ENCODE measurements at regions of chr10 and their contacts with region 1.

Region 1: DNA sequence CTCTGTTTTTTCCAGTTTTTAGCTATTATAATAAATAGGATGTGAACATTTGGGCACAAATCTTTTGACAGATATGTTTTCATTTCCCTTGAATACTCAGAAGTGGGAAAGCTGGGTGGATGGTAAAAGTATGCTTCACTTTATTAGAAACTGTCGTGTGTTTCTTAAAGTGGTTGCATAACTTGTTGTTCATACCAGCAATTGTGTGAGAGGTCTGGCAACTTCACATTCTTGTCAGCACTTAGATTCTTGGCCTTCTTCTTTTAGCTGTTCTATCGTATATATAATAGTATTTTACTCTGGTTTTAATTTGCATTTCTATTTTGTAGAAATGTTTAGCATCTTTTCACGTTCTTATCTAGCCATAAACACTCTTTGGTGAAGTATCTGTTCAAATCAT is 894.4 kb downstream of the KCNMA1 start:
- DNase-seq: no peak
- ATAC-seq: no peak
- H3K4me3 ChIP-seq: no peak overlapping the region
- H3K27ac ChIP-seq: no peak overlapping the region
- H3K4me1 ChIP-seq: no peaks in the 10 kb centered on the region
- H3K27me3 ChIP-seq: peaks cover 79% of the 10 kb centered on the region
- CTCF ChIP-seq: no peak

Region 2: DNA sequence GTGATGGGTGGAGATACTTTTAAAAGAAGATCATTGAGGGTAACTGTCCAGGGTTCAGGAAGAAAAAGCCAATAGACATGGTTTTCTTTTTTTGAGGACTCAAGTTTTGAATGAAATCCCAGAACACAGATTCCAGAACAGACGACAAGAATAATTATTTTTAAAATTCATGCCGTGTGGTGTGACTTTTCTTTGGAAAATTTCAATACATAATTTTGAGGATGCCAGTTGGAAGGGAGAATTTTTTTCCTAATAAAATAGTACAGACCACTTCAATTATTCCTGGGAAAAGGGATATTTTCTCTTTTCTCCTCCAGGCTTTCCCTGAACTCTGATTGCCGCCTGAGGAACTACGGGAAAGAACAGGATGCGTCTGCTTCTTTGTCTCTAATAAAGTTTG is 57.0 kb before region 1 on chr10:
- CTCF ChIA-PET with region 1: no interaction called
- POLR2A ChIA-PET with region 1: no interaction called
- intact Hi-C with region 1: loop called (anchors 5 kb)
- DNase-seq: no peak
- ATAC-seq: no peak
- H3K4me3 ChIP-seq: no peak overlapping the region
- H3K27ac ChIP-seq: no peak overlapping the region
- H3K4me1 ChIP-seq: no peaks in the 10 kb centered on the region
- H3K27me3 ChIP-seq: peaks cover 26% of the 10 kb centered on the region
- CTCF ChIP-seq: no peak

Region 3: DNA sequence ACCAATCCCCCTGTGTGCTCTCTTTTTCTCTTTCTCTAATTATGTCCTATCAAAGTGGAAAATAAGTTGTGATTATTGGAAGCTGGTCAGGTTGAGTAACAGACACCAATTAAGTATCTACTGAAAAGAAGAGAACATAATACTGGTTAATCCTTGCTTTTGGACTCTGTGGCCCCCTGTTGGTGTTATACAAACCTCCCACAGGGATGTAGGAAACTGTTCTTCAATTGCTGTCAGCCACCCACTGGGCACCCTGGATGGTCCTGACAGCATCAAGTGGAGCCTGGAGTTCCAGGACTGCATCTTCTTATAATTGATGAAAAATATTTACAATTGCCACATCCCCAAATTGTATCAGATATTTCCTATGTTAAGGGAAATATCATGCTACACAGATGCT is 45.2 kb before region 1 on chr10:
- CTCF ChIA-PET with region 1: interaction called, 14 read pairs
- POLR2A ChIA-PET with region 1: no interaction called
- intact Hi-C with region 1: no loop called
- DNase-seq: peak; percentile 41
- ATAC-seq: peak; percentile 60
- H3K4me3 ChIP-seq: no peak overlapping the region
- H3K27ac ChIP-seq: no peak overlapping the region
- H3K4me1 ChIP-seq: no peaks in the 10 kb centered on the region
- H3K27me3 ChIP-seq: 0 out of 2 replicates have a peak, but pooled peaks cover 5% of the 10 kb centered on the region
- CTCF ChIP-seq: peak; percentile 67

Region 4: GRCh38 chr10:76763376-76763775 is 20.2 kb after region 1 on chr10:
- CTCF ChIA-PET with region 1: no interaction called
- POLR2A ChIA-PET with region 1: no interaction called
- intact Hi-C with region 1: no loop called
- DNase-seq: no peak
- ATAC-seq: no peak; the same call in 1 of the 2 replicates
- H3K4me3 ChIP-seq: no peak overlapping the region
- H3K27ac ChIP-seq: no peak overlapping the region
- H3K4me1 ChIP-seq: no peaks in the 10 kb centered on the region
- H3K27me3 ChIP-seq: peaks cover 87% of the 10 kb centered on the region
- CTCF ChIP-seq: no peak

Region 5: GRCh38 chr10:76946270-76946669 is 203.1 kb after region 1 on chr10:
- CTCF ChIA-PET with region 1: no interaction called
- POLR2A ChIA-PET with region 1: no interaction called
- intact Hi-C with region 1: loop called (anchors 10 kb)
- DNase-seq: peak; percentile 60
- ATAC-seq: 0 out of 2 replicates have a peak, but pooled peaks have one; percentile 9
- H3K4me3 ChIP-seq: no peak overlapping the region
- H3K27ac ChIP-seq: no peak overlapping the region
- H3K4me1 ChIP-seq: no peaks in the 10 kb centered on the region
- H3K27me3 ChIP-seq: 0 out of 2 replicates have a peak, but pooled peaks cover 2% of the 10 kb centered on the region
- CTCF ChIP-seq: no peak

Measured in PC-3 (cell line).